Pancreas (tissue), 10 donors: ENCODE measurements at regions of chr18 and their contacts with region 1.

Region 1: DNA sequence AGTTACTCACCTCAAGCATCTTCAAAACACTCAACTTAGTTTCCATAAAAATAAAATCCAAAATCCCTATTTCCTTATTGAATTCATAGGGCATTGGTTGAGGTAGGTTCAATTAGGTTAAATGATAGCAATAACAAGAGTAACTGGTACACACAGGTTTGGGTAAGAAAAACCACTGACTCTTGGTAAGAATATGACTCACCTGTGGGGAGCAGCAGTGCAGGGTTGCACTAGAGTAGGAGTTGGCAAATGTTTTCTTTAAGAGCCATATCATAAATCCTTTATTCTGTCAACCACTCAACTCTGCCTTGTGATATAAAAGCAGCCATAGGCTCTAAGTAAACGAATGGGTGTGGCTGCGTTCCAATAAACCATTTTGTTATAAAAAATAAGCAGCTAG is 71.4 kb upstream of the CDH20 start:
- DNase-seq: no peak
- ATAC-seq: no peak
- H3K4me3 ChIP-seq: no peak overlapping the region
- H3K27ac ChIP-seq: no peak overlapping the region
- H3K4me1 ChIP-seq: no peaks in the 10 kb centered on the region
- H3K27me3 ChIP-seq: no peaks in the 10 kb centered on the region
- CTCF ChIP-seq: no peak

Region 2: GRCh38 chr18:61322265-61322873 is 60.5 kb after region 1 on chr18:
- intact Hi-C with region 1: loop called in 1 of 3 experiments (anchors 10 kb)
- DNase-seq: peak in 3 of 6 donors; percentile 35 to 71 (median 38)
- ATAC-seq: peak in 3 of 4 donors; percentile 70 to 77 (median 74)
- H3K4me3 ChIP-seq: no peak overlapping the region
- H3K27ac ChIP-seq: no peak overlapping the region
- H3K4me1 ChIP-seq: no peaks in the 10 kb centered on the region
- H3K27me3 ChIP-seq: no peaks in the 10 kb centered on the region
- CTCF ChIP-seq: peak; percentile 12 to 36 (median 34)